PC-3 (cell line): ENCODE measurements at regions of chr19 and their contacts with region 1.

Region 1: DNA sequence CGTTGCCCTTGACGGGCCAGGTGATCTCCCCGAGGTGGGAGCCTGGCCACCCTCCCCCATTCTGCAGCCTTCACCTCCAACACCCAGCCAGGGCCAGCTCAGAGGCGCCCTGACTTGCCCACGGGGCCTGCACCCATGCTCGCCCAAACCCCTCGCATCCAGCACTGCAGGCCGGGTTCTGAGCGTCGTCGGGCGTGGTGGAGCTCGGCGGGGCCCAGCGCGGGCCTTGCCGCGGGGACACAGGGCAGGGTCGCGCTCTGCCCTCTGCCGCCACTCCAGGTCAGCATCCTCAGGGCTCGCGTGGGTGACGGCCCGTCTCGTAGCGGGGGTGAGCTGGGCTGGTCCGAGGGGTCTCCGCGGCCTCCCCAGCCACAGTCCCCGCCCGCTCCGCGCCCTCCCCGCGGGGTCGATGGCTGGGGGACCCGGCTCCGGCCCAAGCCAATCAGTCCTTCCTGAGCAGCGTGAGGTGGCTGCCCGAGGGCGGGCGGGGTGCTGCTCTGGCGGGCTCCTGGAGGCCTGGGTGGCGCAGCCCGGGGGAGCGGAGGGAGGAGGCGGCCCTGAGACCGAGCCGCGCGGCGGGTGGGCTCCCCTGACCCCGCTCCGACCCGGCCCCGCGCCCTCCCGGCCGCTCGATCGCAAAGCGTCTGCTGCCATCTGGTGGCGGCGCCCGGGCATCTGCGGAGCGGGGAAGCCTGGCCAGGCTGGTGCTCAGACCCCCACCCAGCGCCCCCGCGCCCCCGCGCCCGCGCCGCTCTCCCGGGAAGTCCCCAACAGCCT is 61.4 kb downstream of the CCNE1 start:
- DNase-seq: peak; percentile 43
- ATAC-seq: peak; percentile 92
- H3K4me3 ChIP-seq: peak overlapping the region; percentile 67
- H3K27ac ChIP-seq: no peak overlapping the region
- H3K4me1 ChIP-seq: peaks cover 3% of the 10 kb centered on the region; the same call in 1 of the 2 replicates
- H3K27me3 ChIP-seq: no peaks in the 10 kb centered on the region
- CTCF ChIP-seq: peak; percentile 66

Region 2: GRCh38 chr19:29735800-29736199 is 137.4 kb before region 1 on chr19:
- CTCF ChIA-PET with region 1: interaction called, 3 read pairs
- POLR2A ChIA-PET with region 1: no interaction called
- intact Hi-C with region 1: loop called (anchors 2 kb)
- DNase-seq: no peak
- ATAC-seq: no peak
- H3K4me3 ChIP-seq: no peak overlapping the region
- H3K27ac ChIP-seq: no peak overlapping the region
- H3K4me1 ChIP-seq: no peaks in the 10 kb centered on the region
- H3K27me3 ChIP-seq: peaks cover 44% of the 10 kb centered on the region
- CTCF ChIP-seq: no peak

Region 3: GRCh38 chr19:29761575-29762232 is 111.5 kb before region 1 on chr19:
- CTCF ChIA-PET with region 1: no interaction called
- POLR2A ChIA-PET with region 1: no interaction called
- intact Hi-C with region 1: loop called (anchors 5 kb)
- DNase-seq: no peak
- ATAC-seq: no peak
- H3K4me3 ChIP-seq: no peak overlapping the region
- H3K27ac ChIP-seq: no peak overlapping the region
- H3K4me1 ChIP-seq: no peaks in the 10 kb centered on the region
- H3K27me3 ChIP-seq: no peaks in the 10 kb centered on the region
- CTCF ChIP-seq: no peak

Region 4: DNA sequence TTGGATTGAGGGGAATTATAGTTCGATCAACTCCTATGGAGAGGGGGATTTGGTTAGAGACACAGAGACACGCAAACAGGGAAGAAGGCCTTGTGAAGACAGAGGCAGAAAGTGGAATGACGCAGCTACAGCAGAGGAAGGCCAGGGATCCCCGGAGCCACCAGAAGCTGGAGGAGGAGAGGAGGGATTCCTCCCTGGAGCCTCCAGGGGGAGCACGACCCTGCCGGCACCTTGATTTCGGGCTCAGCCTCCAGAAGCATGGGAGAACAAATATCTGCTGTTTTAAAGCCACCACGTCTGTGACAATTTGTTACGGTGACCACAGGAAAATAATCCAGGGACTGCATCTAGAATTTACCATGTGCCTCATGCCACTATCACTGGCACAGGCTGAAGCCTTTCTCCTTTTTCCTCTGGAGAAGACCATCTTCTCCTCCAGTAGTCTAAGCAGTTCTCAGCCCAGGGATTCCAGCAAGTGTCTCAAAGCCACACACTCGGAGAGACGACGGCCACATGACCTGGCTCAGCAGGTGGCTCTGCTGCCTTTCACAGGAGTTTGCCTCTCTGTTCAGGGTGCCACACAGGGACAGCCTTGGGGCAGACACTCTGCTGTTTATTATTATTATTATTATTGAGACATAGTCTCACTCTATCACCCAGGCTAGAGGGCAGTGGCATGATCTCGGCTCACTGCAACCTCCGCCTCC is 101.4 kb before region 1 on chr19:
- CTCF ChIA-PET with region 1: no interaction called
- POLR2A ChIA-PET with region 1: no interaction called
- intact Hi-C with region 1: loop called (anchors 1 kb)
- DNase-seq: peak; percentile 46
- ATAC-seq: peak; percentile 58
- H3K4me3 ChIP-seq: no peak overlapping the region
- H3K27ac ChIP-seq: no peak overlapping the region
- H3K4me1 ChIP-seq: no peaks in the 10 kb centered on the region
- H3K27me3 ChIP-seq: no peaks in the 10 kb centered on the region
- CTCF ChIP-seq: peak; percentile 64